Activated T-helper 1 cell treated with anti-CD3 and anti-CD28 coated beads, Interleukin-12 subunit alpha, Interleukin-12 subunit beta, Interleukin-2, Interleukin-4 antibody, amounts not matched to agents 30 ng/mL and 10 ng/mL and 1 ng/mL, durations not matched to agents 14 hours and 24 hours and 36 hours (primary cell): ENCODE measurements at regions of chr16 and their contacts with region 1.

Region 1: DNA sequence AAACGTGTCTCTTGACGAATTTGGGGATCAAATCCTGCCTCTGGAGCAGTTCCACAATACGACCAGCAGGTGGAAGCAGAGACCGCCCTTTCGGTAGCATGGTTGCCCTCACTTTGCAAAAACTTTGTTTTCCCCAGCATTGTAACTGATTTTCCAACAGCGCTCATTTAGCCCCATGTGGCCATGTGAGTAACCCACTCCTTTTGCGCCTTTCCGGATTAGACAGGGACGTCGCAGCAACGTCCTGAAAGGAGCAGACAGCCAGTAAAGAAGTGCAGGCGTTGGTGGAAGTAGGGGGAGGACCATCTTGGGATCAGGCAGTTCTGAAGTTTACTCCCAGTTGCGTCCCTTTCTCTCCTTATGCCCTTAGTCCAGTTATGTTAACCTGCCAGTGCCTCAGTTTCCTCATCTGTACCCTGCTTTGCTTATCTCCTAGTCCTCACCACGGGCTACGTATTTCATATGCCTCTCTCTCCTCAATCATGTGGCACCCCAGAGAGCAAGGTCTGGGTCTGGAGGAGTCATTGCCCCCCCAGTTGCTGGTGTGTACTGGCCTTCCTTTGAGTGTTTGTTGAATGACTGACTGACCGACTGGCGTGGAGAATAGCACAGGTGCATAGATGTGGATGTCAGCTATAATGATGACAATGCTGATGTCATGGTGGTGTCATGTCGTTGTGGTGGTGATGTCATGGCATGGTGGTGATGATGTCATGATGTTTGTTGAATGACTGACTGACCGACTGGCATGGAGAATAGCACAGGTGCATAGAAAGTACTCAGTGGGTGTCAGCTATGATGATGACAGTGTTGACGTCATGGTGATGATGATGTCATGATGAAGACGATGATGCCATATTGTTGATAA is 22.3 kb downstream of the TMEM114 start:
- DNase-seq: peak; percentile 66
- H3K4me3 Mint-ChIP-seq: no peak overlapping the region
- H3K27ac Mint-ChIP-seq: peak overlapping the region; percentile 8
- H3K4me1 Mint-ChIP-seq: peaks cover 10% of the 10 kb centered on the region
- H3K27me3 Mint-ChIP-seq: peaks cover 5% of the 10 kb centered on the region

Region 2: GRCh38 chr16:8552487-8553221 is 15.3 kb before region 1 on chr16:
- intact Hi-C with region 1: no loop called
- DNase-seq: no peak
- H3K4me3 Mint-ChIP-seq: no peak overlapping the region
- H3K27ac Mint-ChIP-seq: no peak overlapping the region
- H3K4me1 Mint-ChIP-seq: no peaks in the 10 kb centered on the region
- H3K27me3 Mint-ChIP-seq: peaks cover 2% of the 10 kb centered on the region

Region 3: GRCh38 chr16:8600144-8600775 is 32.3 kb after region 1 on chr16:
- intact Hi-C with region 1: no loop called
- DNase-seq: no peak
- H3K4me3 Mint-ChIP-seq: no peak overlapping the region
- H3K27ac Mint-ChIP-seq: no peak overlapping the region
- H3K4me1 Mint-ChIP-seq: no peaks in the 10 kb centered on the region
- H3K27me3 Mint-ChIP-seq: no peaks in the 10 kb centered on the region

Region 4: GRCh38 chr16:8611886-8612600 is 44.1 kb after region 1 on chr16:
- intact Hi-C with region 1: loop called (anchors 1 kb)
- DNase-seq: no peak
- H3K4me3 Mint-ChIP-seq: no peak overlapping the region
- H3K27ac Mint-ChIP-seq: no peak overlapping the region
- H3K4me1 Mint-ChIP-seq: no peaks in the 10 kb centered on the region
- H3K27me3 Mint-ChIP-seq: peaks cover 2% of the 10 kb centered on the region

Region 5: GRCh38 chr16:8621572-8622314 is 53.8 kb after region 1 on chr16 and contains the start of gene METTL22:
- intact Hi-C with region 1: loop called (anchors 1 kb)
- DNase-seq: peak; percentile 90
- H3K4me3 Mint-ChIP-seq: peak within 1 kb of the TSS; percentile 99
- H3K27ac Mint-ChIP-seq: peak within 1 kb of the TSS; percentile 87
- H3K4me1 Mint-ChIP-seq: peaks cover 12% of the 10 kb centered on the region
- H3K27me3 Mint-ChIP-seq: peaks cover 8% of the 10 kb centered on the region
- total RNA-seq, gene METTL22: 30.0 and 32.0 TPM in 2 replicates

Region 6: DNA sequence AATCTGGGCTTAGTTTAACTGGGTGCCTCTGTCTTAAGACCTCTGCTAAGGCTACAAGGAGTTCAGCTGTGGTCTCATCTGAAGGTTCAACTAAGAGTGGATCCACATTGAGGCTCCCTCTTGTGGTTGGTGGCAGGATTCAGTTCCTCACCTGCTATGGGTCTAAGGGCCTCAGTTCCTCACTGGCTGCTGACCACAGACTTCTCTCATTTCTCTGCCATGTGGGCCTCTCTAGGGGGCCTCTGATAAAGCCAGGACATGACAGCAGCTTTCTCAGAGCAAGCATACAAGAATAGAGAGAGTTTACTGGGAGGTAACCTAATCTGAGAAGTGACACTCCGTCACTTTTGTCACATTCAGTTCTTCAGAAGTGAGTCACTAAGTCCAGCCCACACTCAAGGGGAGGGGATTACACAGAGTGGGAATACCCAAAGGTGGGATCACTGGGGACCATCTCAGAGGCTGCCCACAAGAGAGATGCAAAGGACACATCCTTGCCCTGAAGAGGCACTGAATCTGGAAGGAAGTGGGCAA is 87.3 kb after region 1 on chr16:
- intact Hi-C with region 1: loop called (anchors 2 kb)
- DNase-seq: peak; percentile 24
- H3K4me3 Mint-ChIP-seq: no peak overlapping the region
- H3K27ac Mint-ChIP-seq: no peak overlapping the region
- H3K4me1 Mint-ChIP-seq: peaks cover 5% of the 10 kb centered on the region
- H3K27me3 Mint-ChIP-seq: no peaks in the 10 kb centered on the region

Region 7: GRCh38 chr16:8880839-8881510 is 313.0 kb after region 1 on chr16:
- intact Hi-C with region 1: loop called (anchors 1 kb)
- DNase-seq: no peak
- H3K4me3 Mint-ChIP-seq: no peak overlapping the region
- H3K27ac Mint-ChIP-seq: no peak overlapping the region
- H3K4me1 Mint-ChIP-seq: no peaks in the 10 kb centered on the region
- H3K27me3 Mint-ChIP-seq: peaks cover 2% of the 10 kb centered on the region

Region 8: GRCh38 chr16:8905168-8905762 is 337.3 kb after region 1 on chr16:
- intact Hi-C with region 1: no loop called
- DNase-seq: no peak
- H3K4me3 Mint-ChIP-seq: no peak overlapping the region
- H3K27ac Mint-ChIP-seq: no peak overlapping the region
- H3K4me1 Mint-ChIP-seq: peaks cover 24% of the 10 kb centered on the region
- H3K27me3 Mint-ChIP-seq: no peaks in the 10 kb centered on the region

Region 9: DNA sequence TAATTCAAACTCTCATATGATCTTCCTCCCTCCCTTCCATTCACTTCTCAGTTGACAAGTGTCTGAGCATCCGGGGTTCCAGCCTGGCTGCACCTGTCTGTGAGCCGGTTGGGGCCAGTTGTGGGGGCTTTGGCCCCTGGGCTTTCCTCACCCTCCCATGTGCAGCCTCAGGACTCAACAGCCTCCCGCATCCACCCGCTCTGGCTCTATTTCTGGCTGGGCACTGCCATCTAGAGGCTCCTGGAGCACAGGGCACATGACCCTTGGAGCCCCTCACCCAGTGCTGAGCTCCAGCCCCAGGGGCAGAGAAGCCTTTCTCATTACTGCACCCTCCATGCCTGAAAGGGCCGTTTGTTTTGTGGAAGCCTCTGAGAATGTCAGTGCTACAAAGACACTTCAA is 566.8 kb after region 1 on chr16:
- intact Hi-C with region 1: loop called (anchors 10 kb)
- DNase-seq: peak; percentile 40
- H3K4me3 Mint-ChIP-seq: no peak overlapping the region
- H3K27ac Mint-ChIP-seq: peak overlapping the region; percentile 69
- H3K4me1 Mint-ChIP-seq: peaks cover 22% of the 10 kb centered on the region
- H3K27me3 Mint-ChIP-seq: peaks cover 6% of the 10 kb centered on the region